AG04449 (cell line): ENCODE measurements at regions of chr3 and their contacts with region 1.

Region 1: GRCh38 chr3:174002543-174002942 is 605.0 kb downstream of the NLGN1 start:
- DNase-seq: no peak
- H3K4me3 ChIP-seq: no peak overlapping the region
- CTCF ChIP-seq: no peak

Region 2: DNA sequence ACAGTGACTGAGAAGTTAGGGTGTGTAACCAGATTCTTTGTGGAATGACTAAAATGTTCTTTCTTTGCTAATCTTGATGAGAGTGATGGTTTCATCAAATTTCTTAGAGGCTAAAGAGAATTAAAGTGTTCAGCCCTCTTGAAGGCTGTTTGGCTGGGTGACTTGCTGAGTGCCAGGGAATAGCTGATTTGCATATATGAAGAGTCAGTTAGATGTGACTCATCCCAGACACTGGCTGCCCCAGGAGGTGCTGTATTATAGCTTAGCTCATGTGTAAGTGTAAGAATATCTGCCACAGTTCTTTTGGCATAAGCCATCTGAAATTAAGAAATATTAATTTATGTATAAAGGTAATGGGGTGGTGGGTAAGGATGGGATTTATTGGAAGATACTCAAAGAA is 69.9 kb before region 1 on chr3:
- CTCF ChIA-PET with region 1: no interaction called
- POLR2A ChIA-PET with region 1: no interaction called
- DNase-seq: peak; percentile 55
- H3K4me3 ChIP-seq: no peak overlapping the region
- CTCF ChIP-seq: no peak

Region 3: GRCh38 chr3:174016186-174016585 is 13.6 kb after region 1 on chr3:
- CTCF ChIA-PET with region 1: interaction called, 11 read pairs
- POLR2A ChIA-PET with region 1: no interaction called
- DNase-seq: peak; percentile 64
- H3K4me3 ChIP-seq: no peak overlapping the region
- CTCF ChIP-seq: no peak